ENCODE measurements at regions of chr2 and their contacts with region 1.

Region 1: GRCh38 chr2:165141601-165142354 is 62.1 kb downstream of the SCN3A start:
- DNase-seq: no peak
- H3K4me3 ChIP-seq: no peak overlapping the region
- H3K27ac ChIP-seq: no peak overlapping the region
- H3K4me1 ChIP-seq: no peaks in the 10 kb centered on the region
- H3K27me3 ChIP-seq: no peaks in the 10 kb centered on the region
- CTCF ChIP-seq: no peak
- EP300 ChIP-seq: no peak
- POLR2A ChIP-seq: no peak
- RAD21 ChIP-seq: no peak

Region 2: GRCh38 chr2:165122521-165122920 is 19.3 kb before region 1 on chr2:
- CTCF ChIA-PET with region 1: interaction called, 20 read pairs
- POLR2A ChIA-PET with region 1: no interaction called
- DNase-seq: no peak
- H3K4me3 ChIP-seq: no peak overlapping the region
- H3K27ac ChIP-seq: no peak overlapping the region
- H3K4me1 ChIP-seq: no peaks in the 10 kb centered on the region
- H3K27me3 ChIP-seq: no peaks in the 10 kb centered on the region
- CTCF ChIP-seq: no peak
- EP300 ChIP-seq: no peak
- POLR2A ChIP-seq: no peak
- RAD21 ChIP-seq: no peak

Region 3: GRCh38 chr2:165173215-165173614 is 31.4 kb after region 1 on chr2:
- CTCF ChIA-PET with region 1: no interaction called
- POLR2A ChIA-PET with region 1: no interaction called
- DNase-seq: no peak
- H3K4me3 ChIP-seq: no peak overlapping the region
- H3K27ac ChIP-seq: no peak overlapping the region
- H3K4me1 ChIP-seq: no peaks in the 10 kb centered on the region
- H3K27me3 ChIP-seq: peaks cover 0 to 1% (median 0%) of the 10 kb centered on the region in 4 experiments; a peak in 1 of 7 replicates
- CTCF ChIP-seq: no peak
- EP300 ChIP-seq: no peak
- POLR2A ChIP-seq: no peak
- RAD21 ChIP-seq: no peak

Region 4: GRCh38 chr2:165277295-165277694 is 135.5 kb after region 1 on chr2:
- CTCF ChIA-PET with region 1: no interaction called
- POLR2A ChIA-PET with region 1: no interaction called
- DNase-seq: no peak
- H3K4me3 ChIP-seq: no peak overlapping the region
- H3K27ac ChIP-seq: no peak overlapping the region
- H3K4me1 ChIP-seq: 0 out of 7 replicates have a peak, but pooled peaks cover 0 to 2% (median 0%) of the 10 kb centered on the region in 4 experiments
- H3K27me3 ChIP-seq: no peaks in the 10 kb centered on the region
- CTCF ChIP-seq: no peak
- EP300 ChIP-seq: no peak
- POLR2A ChIP-seq: no peak
- RAD21 ChIP-seq: no peak